HEK293T (cell line): ENCODE measurements at regions of chr1 and their contacts with region 1.

Region 1: DNA sequence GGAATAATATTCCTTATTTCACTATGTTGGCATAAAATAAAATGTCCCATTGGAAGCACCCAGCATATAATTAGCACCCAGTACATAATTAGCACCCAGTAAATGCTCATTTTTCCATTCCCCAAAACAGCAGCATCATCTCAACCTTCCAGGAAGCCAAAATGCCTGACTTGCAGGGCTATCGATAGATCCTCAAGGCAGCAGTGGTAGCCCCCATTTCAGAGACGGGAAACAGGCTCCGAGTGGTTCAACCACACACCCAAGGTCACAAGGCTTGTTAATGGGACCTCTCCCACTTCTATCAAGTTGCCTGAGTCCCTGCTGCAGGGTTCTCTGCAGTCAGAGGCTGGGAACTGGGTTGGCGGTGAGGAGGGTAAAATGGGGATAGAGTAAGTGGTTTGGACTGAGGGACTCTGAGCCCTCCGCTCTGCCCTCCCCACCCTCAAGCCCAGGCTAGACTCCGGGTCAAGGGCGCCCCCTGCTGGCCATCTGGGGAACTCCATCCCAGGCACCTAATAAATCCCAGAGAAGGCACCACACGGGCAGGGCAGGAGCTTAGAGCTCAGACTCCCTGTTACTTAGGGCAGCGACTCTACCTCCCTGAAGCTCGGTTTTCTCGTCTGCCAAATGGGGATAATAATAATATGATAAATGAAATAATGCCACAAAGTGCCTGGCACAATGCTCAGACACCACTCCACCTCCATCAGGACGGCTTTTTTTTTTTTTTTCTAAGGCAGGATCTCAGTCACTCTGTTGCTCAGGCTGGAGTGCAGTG is 21.9 kb upstream of the LAPTM5 start:
- DNase-seq: peak; percentile 96

Region 2: GRCh38 chr1:30618335-30618747 is 161.1 kb before region 1 on chr1:
- CTCF ChIA-PET with region 1: no interaction called
- POLR2A ChIA-PET with region 1: no interaction called
- DNase-seq: no peak

Region 3: DNA sequence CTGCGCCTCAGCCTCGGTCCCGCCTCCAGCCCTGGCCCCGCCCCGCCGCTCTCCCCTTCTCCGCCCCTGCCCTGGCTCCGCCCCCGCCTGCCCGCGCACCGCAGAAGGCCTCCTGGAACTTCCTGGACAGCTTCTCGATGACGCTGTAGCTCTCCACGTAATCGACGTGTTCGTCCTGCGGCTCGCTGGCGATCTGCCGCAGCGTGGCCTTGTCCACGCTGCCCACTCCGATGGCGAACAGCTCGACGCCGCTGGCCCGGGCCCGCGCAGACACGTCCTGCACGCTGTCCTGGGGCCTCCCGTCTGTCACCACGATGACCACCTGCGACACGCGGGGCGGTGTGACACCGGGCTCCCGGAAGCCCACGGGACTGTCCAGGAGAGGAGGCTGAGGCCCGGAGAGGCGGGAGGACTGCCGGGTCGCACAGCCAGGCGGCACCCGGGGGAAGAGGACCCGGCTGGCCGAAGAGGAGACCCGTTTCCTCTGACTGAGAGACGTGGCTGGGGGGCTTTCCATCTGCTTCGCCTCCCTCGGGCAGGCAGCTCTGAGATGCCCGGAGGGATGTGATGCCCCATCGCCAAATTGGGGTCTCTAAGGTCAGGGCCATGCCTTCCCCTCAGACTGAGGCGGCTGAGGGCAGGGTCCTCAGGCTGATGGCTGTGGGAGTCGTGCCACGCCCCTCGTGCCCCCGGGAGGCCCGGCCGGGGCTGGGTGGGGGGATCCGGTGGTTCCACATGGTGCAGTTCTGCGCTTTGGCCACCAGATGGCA is 60.7 kb before region 1 on chr1:
- CTCF ChIA-PET with region 1: interaction called, 116 read pairs
- POLR2A ChIA-PET with region 1: interaction called, 33 read pairs
- DNase-seq: peak; percentile 87

Region 4: DNA sequence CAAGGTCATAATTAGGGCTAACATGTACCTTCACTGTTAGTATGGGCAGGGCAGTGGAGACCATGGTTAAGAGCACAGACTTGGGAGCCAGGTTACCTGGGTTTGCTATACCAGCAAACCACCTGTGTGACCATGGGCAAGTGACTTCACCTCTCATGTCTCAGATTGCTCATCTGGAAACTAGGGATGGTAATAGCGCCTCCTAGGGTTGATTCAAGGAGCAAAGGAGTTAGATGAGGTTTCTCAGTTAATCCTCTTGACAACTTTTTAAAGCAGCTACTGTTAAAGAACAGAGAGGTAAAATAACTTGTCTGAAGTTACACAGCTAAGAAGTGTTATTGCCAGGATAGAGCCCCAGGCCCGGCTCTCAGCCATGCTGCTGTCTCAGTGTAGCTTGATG is 55.3 kb before region 1 on chr1:
- CTCF ChIA-PET with region 1: interaction called, 116 read pairs
- POLR2A ChIA-PET with region 1: interaction called, 33 read pairs
- DNase-seq: no peak

Region 5: DNA sequence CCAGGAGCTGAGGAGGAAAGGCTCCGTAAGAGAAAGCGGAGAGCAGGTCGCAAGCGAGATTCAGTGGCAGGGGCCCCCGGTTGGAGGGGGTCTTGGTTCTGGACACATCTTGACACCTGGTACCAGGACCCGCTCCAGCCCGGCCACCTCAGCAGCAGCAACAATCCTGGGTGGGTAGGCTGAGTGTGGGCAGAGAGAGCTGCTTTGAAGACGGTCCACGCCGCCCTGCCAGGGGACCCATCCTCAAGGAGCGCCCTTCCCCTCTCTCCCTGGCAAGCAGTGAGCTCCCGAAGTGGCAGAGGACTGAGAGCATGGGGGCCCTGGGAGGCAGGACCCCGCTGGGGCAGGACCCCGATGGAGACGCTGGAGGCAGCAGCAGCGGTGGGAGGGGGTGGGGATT is 13.7 kb after region 1 on chr1:
- CTCF ChIA-PET with region 1: interaction called, 11 read pairs
- POLR2A ChIA-PET with region 1: no interaction called
- DNase-seq: no peak

Region 6: DNA sequence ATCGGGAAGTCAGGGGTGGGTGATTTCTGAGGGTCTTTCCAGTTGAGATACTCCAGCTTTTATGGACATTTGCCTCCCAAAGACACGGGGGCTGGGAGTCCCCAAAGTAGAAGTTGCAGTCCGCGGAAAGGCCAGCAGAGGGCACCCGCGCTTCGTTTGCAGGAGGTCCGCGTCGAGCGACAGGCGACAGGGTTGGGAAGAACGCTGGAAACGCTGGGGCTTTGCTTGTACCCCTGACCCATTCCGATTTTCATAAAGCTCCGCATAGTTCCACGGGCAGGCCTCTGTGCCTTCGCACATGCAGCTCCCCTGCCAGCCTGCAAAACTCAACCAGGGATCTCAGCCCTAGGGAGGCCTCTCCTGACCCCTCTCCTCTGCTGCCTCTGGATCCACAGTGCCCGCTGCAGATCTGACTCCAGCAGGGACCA is 22.3 kb after region 1 on chr1:
- CTCF ChIA-PET with region 1: interaction called, 33 read pairs
- POLR2A ChIA-PET with region 1: interaction called, 5 read pairs
- DNase-seq: peak; percentile 91

Region 7: GRCh38 chr1:30888391-30888790 is 108.9 kb after region 1 on chr1:
- CTCF ChIA-PET with region 1: no interaction called
- POLR2A ChIA-PET with region 1: no interaction called
- DNase-seq: no peak

Region 8: GRCh38 chr1:30911046-30911954 is 131.8 kb after region 1 on chr1:
- CTCF ChIA-PET with region 1: interaction called, 46 read pairs
- POLR2A ChIA-PET with region 1: interaction called, 4 read pairs
- DNase-seq: peak; percentile 94